Ovary (tissue), 10 donors: ENCODE measurements at regions of chr17 and their contacts with region 1.

Region 1: DNA sequence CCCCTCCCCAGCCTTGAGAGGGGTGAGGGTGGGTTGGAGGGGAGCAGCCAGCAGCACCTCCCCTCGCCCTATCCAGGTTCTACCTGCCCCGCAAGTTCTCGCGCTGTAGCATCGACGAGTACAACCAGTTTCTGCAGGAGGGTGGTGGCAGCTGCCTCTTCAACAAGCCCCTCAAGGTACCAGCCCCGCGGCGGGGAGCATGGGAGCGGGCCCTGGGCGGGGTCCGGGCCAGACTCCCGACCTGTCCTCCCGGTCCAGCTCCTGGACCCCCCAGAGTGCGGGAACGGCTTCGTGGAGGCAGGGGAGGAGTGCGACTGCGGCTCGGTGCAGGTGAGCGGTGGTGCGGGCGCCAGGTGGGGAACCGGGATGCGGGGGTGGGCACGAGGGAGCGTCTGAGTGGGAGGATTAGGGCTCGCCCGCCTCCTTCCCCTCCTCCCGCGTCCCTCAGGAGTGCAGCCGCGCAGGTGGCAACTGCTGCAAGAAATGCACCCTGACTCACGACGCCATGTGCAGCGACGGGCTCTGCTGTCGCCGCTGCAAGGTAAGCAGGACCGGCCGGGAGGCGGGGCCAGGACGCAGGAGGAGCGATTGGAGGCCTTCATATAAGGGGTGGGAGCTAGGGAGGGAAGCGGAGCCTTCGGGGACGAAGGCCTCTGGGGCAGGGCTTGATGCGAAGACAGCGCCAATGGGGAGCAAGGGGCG is 16.5 kb downstream of the ADAM11 start:
- DNase-seq: peak in 4 of 5 donors; percentile 95 to 97 (median 96)
- H3K4me3 ChIP-seq: peak overlapping the region; percentile 39
- H3K27ac ChIP-seq: no peak overlapping the region
- H3K4me1 ChIP-seq: no peaks in the 10 kb centered on the region
- H3K27me3 ChIP-seq: no peaks in the 10 kb centered on the region
- CTCF ChIP-seq: peak in 1 of 3 donors; percentile 1
- EP300 ChIP-seq: no peak
- POLR2A ChIP-seq: no peak

Region 2: DNA sequence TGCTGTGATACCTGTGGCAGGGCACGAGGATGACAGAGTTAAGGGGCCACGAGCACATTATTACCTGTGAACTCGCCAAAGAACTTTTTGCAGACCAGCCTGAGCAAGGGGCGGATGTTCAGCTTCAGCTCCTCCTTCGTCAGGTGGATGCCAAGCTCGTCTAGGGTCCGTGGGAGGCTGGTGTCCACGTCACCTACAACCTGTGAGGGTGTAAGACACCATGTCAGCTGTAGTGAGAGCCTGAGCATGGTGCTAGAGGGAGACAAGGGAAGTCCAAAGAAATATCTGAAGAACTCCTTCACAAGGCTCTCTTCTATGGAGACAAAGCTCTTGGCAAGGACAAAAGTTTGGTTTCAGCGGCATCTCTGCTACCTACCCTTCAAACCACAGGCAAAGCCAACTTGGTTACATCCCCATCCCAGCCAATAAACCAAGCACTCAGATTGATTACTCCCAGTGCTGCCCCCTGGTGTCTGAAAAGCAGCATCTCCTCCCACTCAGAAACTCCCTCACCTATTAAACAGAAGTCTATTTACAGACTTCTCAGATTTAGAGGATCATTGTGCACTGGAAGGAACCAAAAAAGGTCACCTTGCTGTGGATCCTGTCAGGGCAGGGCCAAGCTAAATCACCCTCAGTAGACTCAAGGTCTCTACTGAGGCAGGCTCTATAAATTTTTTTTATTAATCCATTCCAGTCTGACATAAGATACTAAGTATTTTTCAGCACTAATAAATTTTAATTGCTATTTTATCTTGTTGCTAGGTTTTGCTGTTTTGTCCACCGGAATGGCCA is 89.8 kb after region 1 on chr17:
- intact Hi-C with region 1: loop called (anchors 1 to 5 kb)
- DNase-seq: peak; percentile 33 to 61 (median 59)
- H3K4me3 ChIP-seq: no peak overlapping the region
- H3K27ac ChIP-seq: no peak overlapping the region
- H3K4me1 ChIP-seq: no peaks in the 10 kb centered on the region
- H3K27me3 ChIP-seq: no peaks in the 10 kb centered on the region
- CTCF ChIP-seq: peak; percentile 58 to 78 (median 62)
- EP300 ChIP-seq: no peak
- POLR2A ChIP-seq: no peak

Region 3: DNA sequence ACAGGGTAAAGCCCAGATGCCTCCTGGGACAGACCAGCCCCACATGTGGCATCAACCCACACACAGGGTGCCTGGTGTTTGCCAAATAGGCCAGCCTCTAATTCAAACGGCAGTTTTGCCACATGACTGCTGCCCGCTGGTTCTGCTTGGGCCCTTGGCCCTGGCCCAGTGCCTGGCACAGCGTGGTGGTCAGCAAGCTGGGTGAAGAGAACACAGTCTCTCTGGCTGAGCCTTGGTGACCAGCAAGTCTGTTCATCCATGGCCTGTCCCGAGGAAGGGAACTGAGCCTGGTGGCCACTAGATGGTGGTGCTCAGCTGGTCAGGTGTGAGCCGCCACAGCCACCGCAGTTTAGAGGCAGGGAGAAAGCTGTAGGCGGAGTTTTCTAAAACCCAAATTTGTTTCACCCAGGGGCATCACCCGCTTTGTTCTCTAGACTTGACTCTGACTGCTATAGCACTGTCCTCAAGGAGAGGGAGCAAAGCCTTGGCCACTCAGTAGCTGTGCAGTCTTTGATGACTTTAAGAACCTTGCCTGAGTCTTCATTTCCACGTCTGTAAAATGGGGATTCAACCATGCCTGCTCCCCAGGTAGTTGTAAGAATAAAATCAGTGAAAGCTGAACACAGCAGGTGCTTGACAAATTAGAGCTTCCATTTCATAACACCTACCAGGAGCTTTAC is 144.7 kb after region 1 on chr17:
- intact Hi-C with region 1: no loop called
- DNase-seq: peak; percentile 77 to 86 (median 84)
- H3K4me3 ChIP-seq: no peak overlapping the region
- H3K27ac ChIP-seq: no peak overlapping the region
- H3K4me1 ChIP-seq: no peaks in the 10 kb centered on the region
- H3K27me3 ChIP-seq: no peaks in the 10 kb centered on the region
- CTCF ChIP-seq: peak; percentile 52 to 91 (median 84)
- EP300 ChIP-seq: no peak
- POLR2A ChIP-seq: no peak

Region 4: DNA sequence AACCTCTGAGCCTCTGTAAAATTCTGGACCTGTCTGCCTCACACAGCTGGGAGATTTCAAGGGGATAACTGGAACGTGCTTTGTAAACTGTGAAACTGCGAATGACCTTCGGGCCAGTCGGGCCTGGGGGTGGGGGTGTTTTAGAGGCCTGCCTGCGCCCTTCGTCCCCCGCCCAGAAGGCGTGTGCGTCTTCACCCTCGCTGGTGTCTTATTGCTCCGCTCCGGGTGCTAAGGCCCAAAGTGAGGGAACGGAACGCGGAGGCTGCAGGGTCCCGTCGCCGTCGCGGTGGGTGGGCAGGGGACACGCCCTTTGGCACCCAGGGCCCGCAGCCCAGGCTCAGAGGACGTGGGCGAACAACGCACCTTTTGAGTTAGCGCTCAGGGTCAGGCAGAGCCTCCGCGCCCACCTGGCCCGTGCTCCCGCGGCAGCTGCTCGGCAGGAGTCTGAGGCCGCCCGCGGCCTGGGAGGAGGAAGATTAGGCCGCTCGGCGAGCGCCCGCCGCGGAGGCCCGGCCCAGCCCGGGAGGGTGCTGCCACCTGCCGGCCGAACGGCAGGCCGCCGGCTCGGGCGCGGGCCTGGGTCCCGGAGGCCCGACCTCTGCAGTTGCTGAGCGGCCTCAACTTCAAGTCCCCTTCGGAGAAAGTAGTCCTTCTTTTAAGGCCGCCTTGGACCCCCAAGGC is 246.5 kb after region 1 on chr17:
- intact Hi-C with region 1: loop called (anchors 5 to 10 kb)
- DNase-seq: peak; percentile 73 to 85 (median 79)
- H3K4me3 ChIP-seq: peak overlapping the region; percentile 30
- H3K27ac ChIP-seq: peak overlapping the region; percentile 60 to 79
- H3K4me1 ChIP-seq: peaks cover 9% of the 10 kb centered on the region
- H3K27me3 ChIP-seq: no peaks in the 10 kb centered on the region
- CTCF ChIP-seq: peak; percentile 86 to 97 (median 97)
- EP300 ChIP-seq: no peak
- POLR2A ChIP-seq: no peak

Region 5: DNA sequence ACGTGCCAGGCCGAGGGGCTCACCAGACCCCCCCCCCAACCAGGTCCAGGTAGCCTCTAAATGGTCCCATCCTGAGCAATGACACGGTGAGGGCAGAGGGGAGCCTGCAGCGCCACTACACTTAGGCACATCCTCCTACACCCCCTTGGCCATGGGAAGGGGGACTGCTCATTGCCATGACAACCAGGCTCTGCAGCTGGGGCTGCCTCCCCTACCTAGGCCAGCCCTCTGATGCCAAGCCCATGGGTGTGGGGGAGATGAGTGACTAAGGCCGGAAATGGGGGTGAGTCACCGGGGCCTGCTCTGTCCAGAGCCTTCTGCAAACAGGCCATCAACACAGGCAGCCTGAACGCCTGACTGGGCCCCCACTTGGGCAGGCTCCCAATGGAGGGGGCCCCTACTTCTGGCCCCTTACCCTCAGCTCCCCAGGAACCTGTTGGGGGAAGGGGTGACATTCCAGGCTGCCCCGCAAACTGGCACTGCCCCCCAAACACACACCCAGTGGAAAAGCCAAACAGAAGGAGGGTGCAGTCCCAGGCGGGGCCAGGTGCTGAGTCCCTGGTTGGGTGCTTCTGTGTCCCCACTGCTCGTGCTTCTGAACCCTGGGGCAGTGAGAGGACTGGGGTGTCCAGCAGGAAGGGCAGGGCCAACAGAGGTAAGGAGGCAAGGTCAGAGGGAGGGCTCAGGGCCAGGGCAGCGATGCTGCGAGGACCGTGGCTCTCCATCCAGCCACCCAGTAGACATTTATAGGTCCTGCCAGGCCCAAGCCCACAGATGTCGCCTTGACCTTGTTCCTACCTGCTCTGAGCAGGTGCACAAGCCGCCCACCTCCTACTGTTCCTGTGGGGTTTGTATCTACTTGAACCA is 348.9 kb after region 1 on chr17:
- intact Hi-C with region 1: loop called in 1 of 4 experiments (anchors 5 kb)
- DNase-seq: peak; percentile 71 to 81 (median 78)
- H3K4me3 ChIP-seq: no peak overlapping the region
- H3K27ac ChIP-seq: peak overlapping the region; percentile 25 to 47
- H3K4me1 ChIP-seq: peaks cover 27% of the 10 kb centered on the region
- H3K27me3 ChIP-seq: no peaks in the 10 kb centered on the region
- CTCF ChIP-seq: no peak
- EP300 ChIP-seq: no peak
- POLR2A ChIP-seq: no peak